K562 (cell line): ENCODE measurements at regions of chr1 and their contacts with region 1.

Region 1: DNA sequence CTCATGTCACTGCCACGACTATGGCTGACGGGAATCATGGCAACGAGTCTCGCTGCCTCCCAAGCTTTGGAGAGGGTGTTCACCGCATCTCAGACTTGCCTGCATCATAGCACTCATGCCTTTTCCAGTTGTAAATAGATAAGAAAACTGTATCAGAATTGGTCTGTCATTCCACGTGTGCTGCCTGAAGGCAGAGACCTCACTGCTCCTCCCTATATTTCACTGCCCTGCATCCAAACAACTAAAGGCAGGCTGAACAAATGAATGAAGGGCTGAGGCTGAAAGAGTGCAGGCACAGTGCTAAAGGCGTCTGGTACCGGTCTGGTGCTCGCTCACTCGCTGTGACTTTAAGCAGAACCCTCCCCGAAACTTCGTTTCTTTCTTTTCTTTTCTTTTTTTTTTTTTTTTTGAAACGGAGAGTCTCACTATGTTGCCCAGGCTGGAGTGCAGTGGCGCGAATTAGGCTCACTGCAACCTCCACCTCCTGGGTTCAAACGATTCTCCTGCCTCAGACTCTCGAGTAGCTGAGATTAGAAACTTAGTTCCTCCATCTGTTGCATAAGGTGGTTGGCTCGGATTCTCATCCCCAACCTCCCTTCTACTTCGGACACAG is 542 bp downstream of the EIF2B3 start:
- DNase-seq: peak in 3 of 4 experiments; percentile 31 to 57 (median 38)
- ATAC-seq: peak; percentile 35
- H3K4me3 ChIP-seq: peak overlapping the region; percentile 65
- H3K27ac ChIP-seq: peak overlapping the region; percentile 70
- H3K4me1 ChIP-seq: peaks cover 10 to 15% of the 10 kb centered on the region in 2 experiments; a peak in 4 of 5 replicates
- H3K27me3 ChIP-seq: no peaks in the 10 kb centered on the region
- CTCF ChIP-seq: no peak
- EP300 ChIP-seq: no peak
- POLR2A ChIP-seq: no peak
- RAD21 ChIP-seq: 0 out of 4 replicates have a peak, but pooled peaks of 1 of the 2 experiments have one; percentile 4

Region 2: GRCh38 chr1:44970317-44970716 is 15.5 kb before region 1 on chr1:
- CTCF ChIA-PET with region 1: no interaction called
- POLR2A ChIA-PET with region 1: interaction called, 17 read pairs
- in situ Hi-C with region 1: no loop called
- intact Hi-C with region 1: no loop called
- DNase-seq: no peak
- ATAC-seq: peak; percentile 61
- H3K4me3 ChIP-seq: no peak overlapping the region
- H3K27ac ChIP-seq: no peak overlapping the region; the same call in 2 of the 3 replicates
- H3K4me1 ChIP-seq: peaks cover 0 to 13% of the 10 kb centered on the region in 2 experiments; a peak in 2 of 5 replicates
- H3K27me3 ChIP-seq: no peaks in the 10 kb centered on the region
- CTCF ChIP-seq: no peak
- EP300 ChIP-seq: no peak
- POLR2A ChIP-seq: no peak
- RAD21 ChIP-seq: no peak

Region 3: DNA sequence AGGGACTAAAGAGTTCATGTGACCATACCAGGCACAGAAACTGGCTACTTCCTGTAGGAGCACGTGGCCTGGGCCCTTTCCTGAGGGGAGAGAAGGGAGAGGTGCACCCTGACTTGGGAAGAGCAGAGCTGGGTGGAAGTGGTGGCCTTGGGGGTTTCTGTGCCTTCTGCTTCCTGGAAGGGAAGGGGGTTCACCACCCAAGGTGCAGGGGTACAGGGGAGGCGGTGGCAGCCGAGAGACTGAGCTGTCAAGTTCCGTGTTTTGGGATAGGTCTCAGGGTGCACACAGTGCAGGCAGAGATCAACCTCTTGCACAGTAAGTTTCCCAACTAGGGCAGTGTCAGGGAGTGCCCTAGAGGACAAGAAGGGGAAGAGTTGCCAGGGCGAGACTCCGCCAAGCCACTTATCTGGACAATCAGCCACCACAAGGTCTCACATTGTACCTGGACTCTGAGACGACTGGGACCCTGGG is 15.2 kb after region 1 on chr1:
- CTCF ChIA-PET with region 1: no interaction called
- POLR2A ChIA-PET with region 1: interaction called, 33 read pairs
- in situ Hi-C with region 1: no loop called
- intact Hi-C with region 1: no loop called
- DNase-seq: peak in 1 of 4 experiments; percentile 26
- ATAC-seq: peak; percentile 66
- H3K4me3 ChIP-seq: no peak overlapping the region
- H3K27ac ChIP-seq: 0 out of 3 replicates have a peak overlapping the region, but pooled peaks have one; percentile 1
- H3K4me1 ChIP-seq: no peaks in the 10 kb centered on the region; a peak in 1 of 5 replicates
- H3K27me3 ChIP-seq: no peaks in the 10 kb centered on the region
- CTCF ChIP-seq: no peak
- EP300 ChIP-seq: no peak
- POLR2A ChIP-seq: no peak
- RAD21 ChIP-seq: no peak

Region 4: DNA sequence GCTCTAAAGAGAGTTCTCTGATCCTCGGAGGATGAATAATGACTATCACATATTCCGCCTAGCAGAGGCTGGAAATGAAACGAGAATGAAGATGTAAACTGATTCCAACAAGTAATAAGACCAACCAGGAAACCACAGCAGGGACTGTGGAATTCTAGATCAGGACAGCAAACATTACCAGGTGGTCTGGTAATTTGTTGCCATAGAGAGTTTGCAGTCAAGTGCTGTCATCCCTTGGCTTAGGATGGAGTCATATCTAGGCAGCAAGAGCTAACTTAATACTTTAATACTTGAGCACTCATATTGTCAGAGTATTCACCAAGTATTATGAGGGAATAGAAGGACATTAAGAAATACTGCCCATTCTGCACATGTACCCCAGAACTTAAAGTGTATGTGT is 399.4 kb after region 1 on chr1:
- CTCF ChIA-PET with region 1: no interaction called
- POLR2A ChIA-PET with region 1: no interaction called
- in situ Hi-C with region 1: no loop called
- intact Hi-C with region 1: no loop called
- DNase-seq: no peak
- ATAC-seq: no peak
- H3K4me3 ChIP-seq: no peak overlapping the region
- H3K27ac ChIP-seq: no peak overlapping the region
- H3K4me1 ChIP-seq: no peaks in the 10 kb centered on the region
- H3K27me3 ChIP-seq: peaks cover 0 to 10% of the 10 kb centered on the region in 2 experiments; a peak in 2 of 5 replicates
- CTCF ChIP-seq: no peak
- EP300 ChIP-seq: no peak
- POLR2A ChIP-seq: no peak
- RAD21 ChIP-seq: no peak